CD8-positive, alpha-beta T cell (primary cell): ENCODE measurements at regions of chr2 and their contacts with region 1.

Region 1: DNA sequence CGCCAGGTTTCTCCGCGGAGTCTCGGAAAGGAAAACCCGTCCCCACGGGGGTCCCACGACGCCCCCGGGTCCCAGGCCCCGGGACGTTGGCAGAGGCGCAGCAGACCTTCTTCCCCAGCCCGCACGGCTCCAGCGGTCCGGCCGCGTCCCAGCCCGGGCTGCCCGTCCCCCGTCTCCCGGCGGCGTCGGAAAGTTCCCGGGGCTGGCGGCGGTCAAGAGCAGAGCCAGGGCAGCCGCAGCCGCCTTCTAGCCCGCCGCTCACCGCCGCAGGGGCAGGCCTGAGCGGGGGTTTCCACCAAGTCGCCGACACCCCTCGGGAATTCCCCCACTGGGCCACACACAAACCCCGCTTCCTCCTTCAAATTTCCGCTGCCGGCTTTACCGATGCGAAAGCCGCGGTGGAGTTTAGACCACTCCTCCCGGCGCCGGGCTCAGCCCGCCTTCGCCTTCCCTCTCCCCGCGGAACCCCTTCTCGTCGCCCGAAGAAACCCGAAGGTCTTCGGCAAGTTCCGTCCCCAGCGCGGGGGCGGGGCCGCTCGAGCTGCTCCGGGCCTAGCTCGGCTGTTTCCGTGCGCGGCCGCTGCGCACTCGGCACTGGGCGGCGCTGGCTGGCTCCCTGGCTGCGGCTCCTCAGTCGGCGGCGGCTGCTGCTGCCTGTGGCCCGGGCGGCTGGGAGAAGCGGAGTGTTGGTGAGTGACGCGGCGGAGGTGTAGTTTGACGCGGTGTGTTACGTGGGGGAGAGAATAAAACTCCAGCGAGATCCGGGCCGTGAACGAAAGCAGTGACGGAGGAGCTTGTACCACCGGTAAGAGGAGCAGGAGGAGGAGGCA is at the start of gene CREB1:
- DNase-seq: peak; percentile 99 to 100 (median 100)
- ATAC-seq: peak; percentile 80
- H3K4me3 ChIP-seq: peak within 1 kb of the TSS; percentile 73 to 82
- H3K4me3 Mint-ChIP-seq: peak within 1 kb of the TSS; percentile 90
- H3K27ac ChIP-seq: peak within 1 kb of the TSS; percentile 97 to 99
- H3K27ac Mint-ChIP-seq: peak within 1 kb of the TSS; percentile 98
- H3K4me1 ChIP-seq: peaks cover 59% of the 10 kb centered on the region
- H3K4me1 Mint-ChIP-seq: peaks cover 70% of the 10 kb centered on the region
- H3K27me3 ChIP-seq: no peaks in the 10 kb centered on the region
- H3K27me3 Mint-ChIP-seq: no peaks in the 10 kb centered on the region
- CTCF ChIP-seq: no peak
- total RNA-seq, gene CREB1: 43.9 to 51.4 TPM

Region 2: GRCh38 chr2:206159346-206160124 is 1370.0 kb before region 1 on chr2 and contains the starts of genes EEF1B2 and NDUFS1:
- CTCF ChIA-PET with region 1: no interaction called
- POLR2A ChIA-PET with region 1: interaction called, 6 read pairs
- intact Hi-C with region 1: loop called in 1 of 2 experiments (anchors 2 kb)
- DNase-seq: peak; percentile 95 to 99 (median 96)
- ATAC-seq: peak; percentile 85
- H3K4me3 ChIP-seq: peak within 1 kb of the TSS; percentile 73 to 93
- H3K4me3 Mint-ChIP-seq: peak within 1 kb of the TSS; percentile 99
- H3K27ac ChIP-seq: peak within 1 kb of the TSS; percentile 81 to 91
- H3K27ac Mint-ChIP-seq: peak within 1 kb of the TSS; percentile 100
- H3K4me1 ChIP-seq: peaks cover 30% of the 10 kb centered on the region
- H3K4me1 Mint-ChIP-seq: peaks cover 59% of the 10 kb centered on the region
- H3K27me3 ChIP-seq: no peaks in the 10 kb centered on the region
- H3K27me3 Mint-ChIP-seq: no peaks in the 10 kb centered on the region
- CTCF ChIP-seq: no peak
- total RNA-seq, gene EEF1B2: 1,147 to 1,208 TPM
- total RNA-seq, gene NDUFS1: 23.7 to 28.7 TPM

Region 3: GRCh38 chr2:207166039-207166348 is 363.6 kb before region 1 on chr2:
- CTCF ChIA-PET with region 1: no interaction called
- POLR2A ChIA-PET with region 1: interaction called, 33 read pairs
- intact Hi-C with region 1: loop called (anchors 1 to 2 kb)
- DNase-seq: peak; percentile 88 to 97 (median 95)
- ATAC-seq: peak; percentile 90
- H3K4me3 ChIP-seq: peak overlapping the region; percentile 72 to 90
- H3K4me3 Mint-ChIP-seq: peak overlapping the region; percentile 96
- H3K27ac ChIP-seq: peak overlapping the region; percentile 93 to 98
- H3K27ac Mint-ChIP-seq: peak overlapping the region; percentile 97
- H3K4me1 ChIP-seq: peaks cover 15% of the 10 kb centered on the region
- H3K4me1 Mint-ChIP-seq: peaks cover 46% of the 10 kb centered on the region
- H3K27me3 ChIP-seq: peaks cover 0 to 4% of the 10 kb centered on the region in 2 experiments
- H3K27me3 Mint-ChIP-seq: no peaks in the 10 kb centered on the region
- CTCF ChIP-seq: no peak

Region 4: DNA sequence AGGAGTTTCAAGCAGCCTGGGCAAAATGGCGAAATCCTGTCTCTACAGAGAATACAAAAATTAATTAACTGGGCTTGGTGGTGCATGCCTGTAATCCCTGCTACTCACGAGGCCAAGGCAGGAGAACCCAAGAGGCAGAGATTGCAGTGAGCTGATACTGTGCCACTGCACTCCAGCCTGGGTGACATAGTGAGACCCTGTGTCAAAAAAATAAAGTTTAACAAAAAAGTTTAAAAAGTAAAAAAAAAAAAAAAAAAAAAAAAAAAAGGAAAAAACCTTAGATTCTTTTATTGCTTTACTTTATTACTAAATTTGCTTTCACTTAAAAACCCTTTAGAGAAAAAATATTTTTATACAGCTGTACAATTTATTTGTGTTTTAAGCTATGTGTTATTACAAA is 10.9 kb after region 1 on chr2:
- CTCF ChIA-PET with region 1: interaction called, 3 read pairs
- POLR2A ChIA-PET with region 1: interaction called, 18 read pairs
- intact Hi-C with region 1: no loop called
- DNase-seq: no peak
- ATAC-seq: no peak
- H3K4me3 ChIP-seq: no peak overlapping the region
- H3K4me3 Mint-ChIP-seq: no peak overlapping the region
- H3K27ac ChIP-seq: no peak overlapping the region
- H3K27ac Mint-ChIP-seq: no peak overlapping the region
- H3K4me1 ChIP-seq: peaks cover 37% of the 10 kb centered on the region
- H3K4me1 Mint-ChIP-seq: peaks cover 72% of the 10 kb centered on the region
- H3K27me3 ChIP-seq: no peaks in the 10 kb centered on the region
- H3K27me3 Mint-ChIP-seq: no peaks in the 10 kb centered on the region
- CTCF ChIP-seq: no peak

Region 5: DNA sequence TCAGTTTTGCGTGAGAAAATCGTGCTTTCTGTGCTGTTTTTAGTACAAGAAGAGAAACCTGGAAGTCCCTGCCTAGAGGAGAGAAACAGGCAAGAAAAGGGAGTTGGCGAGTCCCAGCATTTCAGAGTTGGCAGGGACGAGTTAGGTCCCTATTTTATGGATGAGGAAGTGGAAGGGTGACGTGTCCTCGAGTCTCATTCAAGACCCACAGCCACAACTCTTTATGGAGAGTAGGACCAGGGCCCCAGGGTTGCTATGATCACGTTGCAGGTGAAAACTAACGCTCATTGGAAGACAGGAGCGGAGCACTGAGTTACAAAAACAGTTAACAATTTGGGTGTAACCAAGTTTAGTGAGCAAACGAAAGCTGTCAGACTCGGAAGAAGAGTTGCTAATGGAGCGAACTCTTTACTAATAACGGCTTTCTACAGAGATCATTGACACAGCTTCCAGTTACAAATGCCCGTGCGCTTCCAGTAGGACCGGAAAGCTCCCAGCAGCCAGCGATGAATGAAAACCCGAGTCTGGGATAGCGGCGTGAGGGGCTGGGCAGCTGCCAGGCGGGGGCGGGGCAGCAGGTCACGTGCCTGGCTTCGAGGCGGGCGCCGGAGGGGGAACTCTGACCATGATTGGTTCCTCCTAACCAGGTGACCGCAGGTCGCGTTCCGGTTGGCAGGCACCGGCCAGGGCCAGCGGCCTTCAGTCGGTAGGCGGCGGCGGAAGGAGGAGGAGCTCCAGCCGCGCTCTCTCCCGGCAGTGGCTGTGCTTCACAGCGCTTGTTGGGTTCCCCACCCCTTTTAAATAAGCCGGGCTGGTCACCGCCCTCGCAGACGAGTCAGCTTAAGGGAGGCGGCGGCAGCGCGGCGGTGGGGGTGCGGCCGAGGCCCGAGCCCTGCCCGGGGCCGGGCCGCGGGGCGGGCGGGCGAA is 181.5 kb after region 1 on chr2 and contains the start of gene CCNYL1:
- CTCF ChIA-PET with region 1: no interaction called
- POLR2A ChIA-PET with region 1: interaction called, 23 read pairs
- intact Hi-C with region 1: loop called (anchors 1 to 2 kb)
- DNase-seq: peak; percentile 95 to 99 (median 97)
- ATAC-seq: peak; percentile 96
- H3K4me3 ChIP-seq: peak within 1 kb of the TSS; percentile 87 to 97
- H3K4me3 Mint-ChIP-seq: peak within 1 kb of the TSS; percentile 91
- H3K27ac ChIP-seq: peak within 1 kb of the TSS; percentile 69 to 71
- H3K27ac Mint-ChIP-seq: peak within 1 kb of the TSS; percentile 86
- H3K4me1 ChIP-seq: peaks cover 19% of the 10 kb centered on the region
- H3K4me1 Mint-ChIP-seq: peaks cover 22% of the 10 kb centered on the region
- H3K27me3 ChIP-seq: no peaks in the 10 kb centered on the region
- H3K27me3 Mint-ChIP-seq: no peaks in the 10 kb centered on the region
- CTCF ChIP-seq: no peak
- total RNA-seq, gene CCNYL1: 12.0 to 12.3 TPM

Region 6: DNA sequence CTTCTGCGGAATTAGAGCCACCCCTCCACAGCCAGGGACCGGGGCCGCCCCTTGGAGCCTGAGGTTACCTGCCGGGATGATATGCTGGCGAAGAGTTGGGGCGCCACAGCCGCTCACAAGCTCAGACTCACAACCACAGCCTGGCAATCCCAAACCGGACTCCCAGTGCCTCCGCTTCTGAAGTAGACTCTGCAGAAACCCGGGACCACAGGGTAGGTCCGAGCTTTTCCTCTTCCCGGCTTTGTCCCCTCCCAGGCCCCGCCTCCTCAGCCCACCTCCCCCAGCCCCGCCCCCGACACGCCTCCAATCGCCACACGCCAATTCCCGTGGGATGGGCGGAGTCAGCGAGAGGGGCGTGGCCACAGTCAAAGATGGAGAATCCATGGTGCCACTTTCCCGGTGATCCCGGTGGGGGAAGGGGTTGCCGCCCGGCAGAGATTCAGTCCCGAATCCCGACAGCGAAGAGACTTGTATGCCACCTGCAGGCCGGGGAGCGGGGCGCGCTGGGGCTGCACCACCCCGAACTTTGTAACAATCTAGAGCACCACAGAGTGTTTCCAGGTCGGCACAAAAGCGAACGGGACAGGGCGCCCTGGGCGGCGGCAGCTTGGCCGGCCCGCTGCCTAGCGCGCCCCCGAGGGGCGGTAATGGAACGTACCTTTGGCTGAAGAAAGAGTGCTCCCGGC is 725.5 kb after region 1 on chr2 and contains the start of gene IDH1:
- CTCF ChIA-PET with region 1: no interaction called
- POLR2A ChIA-PET with region 1: no interaction called
- intact Hi-C with region 1: loop called in 1 of 2 experiments (anchors 5 kb)
- DNase-seq: peak; percentile 83 to 97 (median 93)
- ATAC-seq: peak; percentile 85
- H3K4me3 ChIP-seq: peak within 1 kb of the TSS; percentile 99
- H3K4me3 Mint-ChIP-seq: peak within 1 kb of the TSS; percentile 94
- H3K27ac ChIP-seq: peak within 1 kb of the TSS; percentile 31 to 51
- H3K27ac Mint-ChIP-seq: peak within 1 kb of the TSS; percentile 83
- H3K4me1 ChIP-seq: peaks cover 13% of the 10 kb centered on the region
- H3K4me1 Mint-ChIP-seq: peaks cover 31% of the 10 kb centered on the region
- H3K27me3 ChIP-seq: no peaks in the 10 kb centered on the region
- H3K27me3 Mint-ChIP-seq: no peaks in the 10 kb centered on the region
- CTCF ChIP-seq: no peak
- total RNA-seq, gene IDH1: 3.0 to 4.0 TPM